Activated CD4-positive, alpha-beta T cell treated with anti-CD3 and anti-CD28 coated beads for 36 hours (primary cell): ENCODE measurements at regions of chr14 and their contacts with region 1.

Region 1: DNA sequence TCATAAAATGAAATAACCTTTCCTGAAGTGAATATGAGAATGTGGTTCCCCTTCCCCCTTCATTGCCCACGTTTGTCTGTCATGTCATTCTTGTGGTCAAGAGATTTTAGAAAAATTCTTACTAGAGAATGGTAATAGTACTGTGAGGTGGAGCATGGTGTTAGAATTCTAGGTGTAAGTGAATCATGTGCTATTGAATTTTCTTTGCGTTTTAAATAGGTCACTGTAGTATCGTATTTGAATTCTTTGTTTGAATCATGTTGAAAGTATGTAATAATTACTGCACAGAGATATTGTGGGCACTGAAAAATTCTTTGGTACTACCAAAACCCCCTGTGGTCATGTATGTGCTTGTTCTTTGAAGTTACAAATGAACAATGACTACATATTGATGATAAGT is 49.9 kb downstream of the FUT8 start:
- DNase-seq: peak; percentile 48
- ATAC-seq: peak; percentile 95
- H3K4me3 Mint-ChIP-seq: no peak overlapping the region
- H3K27ac Mint-ChIP-seq: peak overlapping the region; percentile 14
- H3K4me1 Mint-ChIP-seq: peaks cover 37% of the 10 kb centered on the region
- H3K27me3 Mint-ChIP-seq: no peaks in the 10 kb centered on the region

Region 2: GRCh38 chr14:65438266-65438933 is 24.0 kb before region 1 on chr14:
- CTCF ChIA-PET with region 1: no interaction called
- POLR2A ChIA-PET with region 1: no interaction called
- intact Hi-C with region 1: loop called in 1 of 2 experiments (anchors 1 kb)
- DNase-seq: no peak
- ATAC-seq: peak; percentile 75
- H3K4me3 Mint-ChIP-seq: no peak overlapping the region
- H3K27ac Mint-ChIP-seq: peak overlapping the region; percentile 74
- H3K4me1 Mint-ChIP-seq: peaks cover 37% of the 10 kb centered on the region
- H3K27me3 Mint-ChIP-seq: no peaks in the 10 kb centered on the region

Region 3: DNA sequence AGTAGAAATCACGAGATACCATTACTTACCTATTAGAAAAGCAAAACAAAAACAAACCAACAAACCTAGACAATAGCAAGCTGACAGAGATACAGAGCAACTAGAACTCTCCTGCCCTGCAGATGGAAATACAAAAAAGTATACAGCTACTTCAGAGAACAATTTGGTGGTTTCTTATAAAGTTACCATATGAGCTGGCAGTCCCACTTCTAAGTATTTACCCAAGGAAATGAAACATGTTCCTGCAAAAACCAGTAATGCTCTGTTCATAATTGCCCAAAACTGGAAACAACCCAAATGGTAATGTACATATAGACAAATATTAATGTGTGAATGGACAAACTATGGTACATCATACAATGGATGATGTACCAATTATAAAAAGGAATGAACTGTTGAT is 18.2 kb before region 1 on chr14:
- CTCF ChIA-PET with region 1: interaction called, 3 read pairs
- POLR2A ChIA-PET with region 1: no interaction called
- intact Hi-C with region 1: loop called (anchors 2 kb)
- DNase-seq: no peak
- ATAC-seq: peak; percentile 85
- H3K4me3 Mint-ChIP-seq: no peak overlapping the region
- H3K27ac Mint-ChIP-seq: no peak overlapping the region
- H3K4me1 Mint-ChIP-seq: peaks cover 31% of the 10 kb centered on the region
- H3K27me3 Mint-ChIP-seq: no peaks in the 10 kb centered on the region

Region 4: DNA sequence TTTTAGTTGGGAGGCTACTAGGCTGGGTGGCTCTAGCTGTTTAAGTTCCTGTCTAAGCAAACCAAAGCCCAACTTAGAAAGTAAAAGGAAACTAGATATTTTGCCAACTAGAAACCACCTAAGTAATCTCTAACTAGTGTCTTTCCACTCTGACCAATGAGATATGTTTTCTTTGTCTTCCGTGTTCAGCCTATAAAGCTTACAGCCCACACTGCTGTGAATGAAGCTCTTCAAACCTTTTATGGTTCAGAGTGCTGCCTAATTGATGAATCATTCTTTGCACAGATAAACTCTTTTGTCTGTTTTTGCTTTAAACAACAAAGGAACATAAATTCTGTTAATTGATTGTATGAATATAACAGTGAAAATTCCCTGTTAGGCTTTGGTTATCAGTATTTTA is 16.2 kb after region 1 on chr14:
- CTCF ChIA-PET with region 1: interaction called, 6 read pairs
- POLR2A ChIA-PET with region 1: no interaction called
- intact Hi-C with region 1: loop called in 1 of 2 experiments (anchors 2 kb)
- DNase-seq: no peak
- ATAC-seq: peak; percentile 80
- H3K4me3 Mint-ChIP-seq: no peak overlapping the region
- H3K27ac Mint-ChIP-seq: peak overlapping the region; percentile 8
- H3K4me1 Mint-ChIP-seq: peaks cover 72% of the 10 kb centered on the region
- H3K27me3 Mint-ChIP-seq: no peaks in the 10 kb centered on the region